Calu3 (cell line): ENCODE measurements at regions of chr5 and their contacts with region 1.

Region 1: GRCh38 chr5:166123717-166124116 is 2167.7 kb upstream of the WWC1 start:
- DNase-seq: no peak
- H3K4me3 Mint-ChIP-seq: no peak overlapping the region
- H3K27ac Mint-ChIP-seq: no peak overlapping the region
- H3K4me1 Mint-ChIP-seq: no peaks in the 10 kb centered on the region
- H3K27me3 Mint-ChIP-seq: no peaks in the 10 kb centered on the region
- CTCF ChIP-seq: no peak

Region 2: DNA sequence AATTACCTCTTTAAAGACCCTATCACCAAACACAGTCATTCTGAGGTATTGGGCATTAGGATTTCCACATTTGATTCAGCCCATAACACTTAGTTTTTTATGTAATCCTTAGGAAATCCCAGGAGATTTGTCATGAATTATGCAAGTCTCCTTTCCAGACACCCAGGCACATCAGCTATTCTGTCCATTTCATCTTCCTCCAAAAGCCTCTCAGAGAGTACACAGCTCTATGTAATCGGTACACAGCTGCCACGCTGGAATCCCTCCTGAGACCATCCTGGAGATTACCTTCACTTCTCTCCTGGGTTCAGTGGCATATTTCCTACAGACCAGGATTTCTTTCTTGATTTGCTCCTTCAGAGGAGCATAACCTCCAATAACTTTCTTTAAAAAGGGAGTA is 142.0 kb before region 1 on chr5:
- CTCF ChIA-PET with region 1: no interaction called
- intact Hi-C with region 1: loop called (anchors 2 kb)
- DNase-seq: no peak
- H3K4me3 Mint-ChIP-seq: no peak overlapping the region
- H3K27ac Mint-ChIP-seq: no peak overlapping the region
- H3K4me1 Mint-ChIP-seq: no peaks in the 10 kb centered on the region
- H3K27me3 Mint-ChIP-seq: no peaks in the 10 kb centered on the region
- CTCF ChIP-seq: no peak

Region 3: DNA sequence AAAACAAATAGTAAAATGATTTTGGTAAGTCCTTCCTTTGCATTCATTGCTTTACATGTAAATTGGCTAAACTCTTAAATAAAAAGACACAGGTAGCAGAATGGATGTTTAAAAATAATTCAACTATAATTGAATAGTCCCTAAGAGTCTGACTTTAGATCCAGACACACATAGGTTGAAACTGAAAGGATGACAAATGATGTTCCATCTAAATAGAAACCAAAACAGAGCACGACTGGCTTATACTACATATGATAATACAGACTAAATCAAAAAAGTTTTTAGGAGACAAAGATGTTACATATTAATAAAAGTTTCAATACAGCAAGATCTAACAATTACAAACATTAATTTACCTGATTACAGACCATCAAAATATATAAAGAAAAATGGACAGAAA is 112.6 kb after region 1 on chr5:
- CTCF ChIA-PET with region 1: no interaction called
- intact Hi-C with region 1: no loop called
- DNase-seq: no peak
- H3K4me3 Mint-ChIP-seq: no peak overlapping the region
- H3K27ac Mint-ChIP-seq: no peak overlapping the region
- H3K4me1 Mint-ChIP-seq: no peaks in the 10 kb centered on the region
- H3K27me3 Mint-ChIP-seq: no peaks in the 10 kb centered on the region
- CTCF ChIP-seq: no peak